Mammary epithelial cell (primary cell): ENCODE measurements at regions of chr2 and their contacts with region 1.

Region 1: DNA sequence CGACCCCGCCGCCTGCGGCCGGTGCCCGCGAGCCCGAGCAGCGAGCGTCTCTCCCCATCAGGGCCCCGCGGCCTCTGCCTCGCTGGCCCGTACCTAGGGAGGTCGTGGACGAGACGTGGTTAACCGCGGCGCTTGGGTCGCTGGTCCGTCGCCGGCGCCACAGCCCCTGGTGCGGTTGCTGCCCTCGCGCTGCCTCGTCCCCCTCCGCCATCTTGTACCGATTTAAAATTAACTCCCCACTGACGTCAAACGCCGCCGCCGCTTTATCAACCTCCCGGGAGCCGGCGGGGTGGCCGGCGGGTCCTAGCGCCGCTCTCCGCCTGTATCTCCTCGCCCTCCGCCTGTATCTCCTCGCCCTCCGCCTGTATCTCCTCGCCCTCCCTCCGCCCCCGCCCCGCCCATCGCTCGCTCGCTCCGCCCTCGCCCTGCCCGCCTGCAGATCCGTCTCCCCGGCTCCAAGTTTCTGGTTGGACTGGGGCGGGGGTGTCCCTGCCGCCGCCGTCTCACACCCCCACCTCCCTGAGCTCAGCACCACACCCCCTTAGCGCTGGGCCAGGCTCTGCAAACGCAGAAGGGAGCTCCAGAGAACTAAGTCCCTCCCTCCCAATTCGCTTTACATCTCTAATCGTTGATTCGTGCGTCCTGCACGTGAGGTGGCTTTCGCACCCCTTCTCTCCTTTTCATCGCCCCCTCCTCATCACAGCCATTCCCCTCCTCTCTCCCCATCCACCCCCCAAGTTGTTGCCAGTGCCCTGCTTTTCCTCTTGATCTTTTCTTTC is at the start of gene ATL2:
- DNase-seq: peak; percentile 94
- H3K4me3 ChIP-seq: peak within 1 kb of the TSS; percentile 85 to 96 (median 94)
- H3K27ac ChIP-seq: peak within 1 kb of the TSS; percentile 95
- H3K4me1 ChIP-seq: peaks cover 13% of the 10 kb centered on the region
- H3K27me3 ChIP-seq: no peaks in the 10 kb centered on the region
- CTCF ChIP-seq: no peak
- total RNA-seq, gene ATL2: 72.9 to 89.9 TPM

Region 2: GRCh38 chr2:38394903-38395341 is 17.7 kb after region 1 on chr2:
- CTCF ChIA-PET with region 1: no interaction called
- dilution Hi-C with region 1: no loop called
- in situ Hi-C with region 1: no loop called
- intact Hi-C with region 1: loop called (anchors 1 kb)
- DNase-seq: peak; percentile 98
- H3K4me3 ChIP-seq: no peak overlapping the region
- H3K27ac ChIP-seq: peak overlapping the region; percentile 97
- H3K4me1 ChIP-seq: peaks cover 40% of the 10 kb centered on the region
- H3K27me3 ChIP-seq: no peaks in the 10 kb centered on the region
- CTCF ChIP-seq: no peak

Region 3: GRCh38 chr2:38432820-38433606 is 55.8 kb after region 1 on chr2:
- CTCF ChIA-PET with region 1: no interaction called
- dilution Hi-C with region 1: no loop called
- in situ Hi-C with region 1: no loop called
- intact Hi-C with region 1: loop called (anchors 5 kb)
- DNase-seq: peak; percentile 35
- H3K4me3 ChIP-seq: no peak overlapping the region
- H3K27ac ChIP-seq: no peak overlapping the region
- H3K4me1 ChIP-seq: peaks cover 42% of the 10 kb centered on the region
- H3K27me3 ChIP-seq: no peaks in the 10 kb centered on the region
- CTCF ChIP-seq: no peak

Region 4: GRCh38 chr2:38465789-38466127 is 88.5 kb after region 1 on chr2:
- CTCF ChIA-PET with region 1: interaction called, 11 read pairs
- dilution Hi-C with region 1: no loop called
- in situ Hi-C with region 1: loop called in 1 of 2 experiments (anchors 5 kb)
- intact Hi-C with region 1: loop called (anchors 1 kb)
- DNase-seq: peak; percentile 34
- H3K4me3 ChIP-seq: no peak overlapping the region
- H3K27ac ChIP-seq: no peak overlapping the region
- H3K4me1 ChIP-seq: peaks cover 41% of the 10 kb centered on the region
- H3K27me3 ChIP-seq: no peaks in the 10 kb centered on the region
- CTCF ChIP-seq: peak; percentile 52 to 83

Region 5: DNA sequence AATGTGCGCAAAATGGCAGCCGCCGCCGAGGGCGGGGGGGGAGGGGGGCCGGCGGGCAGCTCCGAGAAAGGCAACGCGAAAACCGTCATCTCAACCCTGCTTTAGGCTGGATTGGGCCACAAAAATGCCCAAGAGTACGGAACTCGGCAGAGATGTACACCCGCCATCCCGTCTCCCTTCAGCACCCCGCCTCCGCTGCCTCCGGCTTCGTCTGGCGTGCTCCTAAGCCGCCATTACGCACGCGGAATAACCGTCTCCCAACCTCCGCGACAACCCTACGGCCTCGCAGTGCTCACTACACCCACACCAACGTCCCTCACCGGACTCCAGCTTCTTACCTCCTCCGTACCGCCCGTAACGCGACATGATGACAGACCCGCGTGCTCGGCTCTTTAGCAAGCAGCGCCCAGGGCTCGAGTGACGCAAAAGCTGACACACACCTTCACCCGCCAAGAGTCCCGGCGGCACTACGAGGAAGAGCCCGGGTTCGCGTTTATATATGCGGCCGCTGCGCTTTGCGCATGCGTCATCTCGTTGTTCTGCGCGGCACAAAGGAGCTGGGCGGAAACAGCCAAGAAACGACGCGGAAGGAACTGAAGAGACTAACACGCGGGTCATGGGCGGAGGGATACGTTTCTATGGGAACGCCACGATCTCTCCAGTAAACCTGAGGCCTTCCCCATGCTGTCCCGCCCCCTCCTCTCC is 373.8 kb after region 1 on chr2 and contains the start of gene SRSF7:
- CTCF ChIA-PET with region 1: no interaction called
- dilution Hi-C with region 1: no loop called
- in situ Hi-C with region 1: no loop called
- intact Hi-C with region 1: loop called (anchors 2 kb)
- DNase-seq: peak; percentile 96
- H3K4me3 ChIP-seq: peak within 1 kb of the TSS; percentile 70 to 91 (median 89)
- H3K27ac ChIP-seq: peak within 1 kb of the TSS; percentile 90
- H3K4me1 ChIP-seq: peaks cover 19% of the 10 kb centered on the region
- H3K27me3 ChIP-seq: no peaks in the 10 kb centered on the region
- CTCF ChIP-seq: no peak
- total RNA-seq, gene SRSF7: 72.7 to 183 TPM

Region 6: DNA sequence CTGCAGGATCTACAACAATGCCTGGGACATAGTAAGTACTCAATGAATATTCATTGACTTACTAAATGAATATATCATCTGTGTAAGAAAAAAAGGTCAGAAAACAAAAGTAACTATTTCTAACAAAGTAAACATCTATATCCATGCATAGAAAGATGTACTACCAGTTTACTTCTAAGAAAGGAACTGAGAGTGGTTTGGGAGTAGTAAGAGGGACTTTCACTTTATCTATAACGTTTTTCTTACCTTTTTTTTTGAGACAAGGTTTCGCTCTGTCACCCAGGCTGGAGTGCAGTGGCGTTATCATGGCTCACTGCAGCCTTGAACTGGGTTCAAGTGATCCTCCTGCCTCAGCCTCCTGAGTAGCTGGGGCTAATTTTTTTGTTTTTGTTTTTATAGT is 472.8 kb after region 1 on chr2:
- CTCF ChIA-PET with region 1: no interaction called
- dilution Hi-C with region 1: no loop called
- in situ Hi-C with region 1: no loop called
- intact Hi-C with region 1: no loop called
- DNase-seq: no peak
- H3K4me3 ChIP-seq: no peak overlapping the region
- H3K27ac ChIP-seq: no peak overlapping the region
- H3K4me1 ChIP-seq: no peaks in the 10 kb centered on the region
- H3K27me3 ChIP-seq: no peaks in the 10 kb centered on the region
- CTCF ChIP-seq: no peak